ENCODE measurements at regions of chr7 and their contacts with region 1.

Region 1: DNA sequence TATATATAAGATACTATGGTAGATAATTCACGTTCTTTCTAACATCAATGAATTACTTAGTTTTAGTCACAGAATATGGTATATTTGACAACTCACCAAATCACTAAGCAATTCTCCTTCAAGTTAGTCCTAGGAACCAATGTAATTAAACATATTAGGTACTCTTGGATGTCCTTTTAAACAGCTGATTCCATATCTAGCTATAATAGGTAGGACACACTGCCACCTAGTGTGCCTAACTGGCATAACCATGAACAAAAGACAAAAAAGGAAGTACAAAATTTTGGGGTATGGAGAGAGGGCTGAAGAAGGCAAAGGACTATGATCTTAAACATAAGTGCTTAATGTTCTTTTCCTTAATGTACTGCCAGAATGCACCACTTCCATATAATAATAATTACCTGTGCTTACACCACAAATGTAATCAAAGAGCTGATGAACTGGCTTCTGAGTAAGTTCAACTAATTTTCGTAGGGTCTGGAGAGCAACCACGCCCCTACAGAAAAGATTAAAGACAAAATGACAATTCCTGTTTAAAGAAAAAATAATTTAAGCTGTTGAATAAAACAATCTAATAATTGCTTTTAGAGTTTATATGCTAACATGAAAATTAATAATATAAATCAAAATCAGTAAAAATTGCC is 28.7 kb downstream of the PNPLA8 start:
- DNase-seq: peak; percentile 70 to 82 (median 70)
- ATAC-seq: peak; percentile 91
- H3K4me3 ChIP-seq: no peak overlapping the region
- H3K27ac ChIP-seq: no peak overlapping the region
- H3K4me1 ChIP-seq: no peaks in the 10 kb centered on the region
- H3K27me3 ChIP-seq: no peaks in the 10 kb centered on the region
- CTCF ChIP-seq: peak; percentile 76 to 95 (median 87)
- EP300 ChIP-seq: no peak
- POLR2A ChIP-seq: no peak
- RAD21 ChIP-seq: peak; percentile 92 to 93

Region 2: DNA sequence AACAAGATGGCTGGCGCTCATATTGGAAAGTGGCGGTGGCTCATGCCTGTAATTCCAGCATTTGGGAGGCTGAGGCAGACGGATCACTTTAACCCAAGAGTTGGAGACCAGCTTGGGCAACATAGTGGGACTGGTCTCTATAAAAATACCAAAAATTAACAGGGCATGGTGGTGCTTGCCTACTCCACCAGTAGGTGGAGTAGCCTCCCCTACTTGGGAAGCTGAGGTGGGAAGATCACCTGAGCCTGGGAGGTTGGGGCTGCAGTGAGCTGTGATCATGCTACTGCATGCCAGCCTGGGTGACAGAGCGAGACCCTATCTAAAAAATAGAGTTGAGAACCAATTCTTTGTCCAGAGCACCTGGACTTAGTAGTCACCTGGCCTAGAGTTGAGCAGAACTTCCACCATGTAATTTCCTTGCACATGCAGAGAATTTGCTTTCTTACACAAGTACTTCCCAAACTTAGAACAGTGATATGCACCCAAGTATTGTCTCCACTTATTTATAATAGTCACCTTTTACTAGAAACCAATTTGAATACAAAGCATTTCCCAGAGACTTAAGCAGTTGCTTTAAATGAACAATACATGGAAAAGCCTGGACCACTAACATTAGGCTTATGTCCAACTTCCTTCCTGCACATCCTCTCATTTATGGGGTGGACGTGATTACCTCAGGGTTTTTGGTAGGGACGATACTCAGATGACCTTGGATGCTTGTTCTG is 382.9 kb before region 1 on chr7:
- CTCF ChIA-PET with region 1: interaction called, 9 read pairs
- POLR2A ChIA-PET with region 1: no interaction called
- in situ Hi-C with region 1: no loop called
- intact Hi-C with region 1: loop called (anchors 1 kb)
- DNase-seq: peak in 2 of 4 experiments; percentile 54 to 68
- ATAC-seq: peak; percentile 94
- H3K4me3 ChIP-seq: no peak overlapping the region
- H3K27ac ChIP-seq: no peak overlapping the region
- H3K4me1 ChIP-seq: peaks cover 0 to 3% of the 10 kb centered on the region in 2 experiments; a peak in 1 of 5 replicates
- H3K27me3 ChIP-seq: no peaks in the 10 kb centered on the region
- CTCF ChIP-seq: peak; percentile 82 to 94 (median 93)
- EP300 ChIP-seq: no peak
- POLR2A ChIP-seq: no peak
- RAD21 ChIP-seq: peak; percentile 76 to 85

Region 3: DNA sequence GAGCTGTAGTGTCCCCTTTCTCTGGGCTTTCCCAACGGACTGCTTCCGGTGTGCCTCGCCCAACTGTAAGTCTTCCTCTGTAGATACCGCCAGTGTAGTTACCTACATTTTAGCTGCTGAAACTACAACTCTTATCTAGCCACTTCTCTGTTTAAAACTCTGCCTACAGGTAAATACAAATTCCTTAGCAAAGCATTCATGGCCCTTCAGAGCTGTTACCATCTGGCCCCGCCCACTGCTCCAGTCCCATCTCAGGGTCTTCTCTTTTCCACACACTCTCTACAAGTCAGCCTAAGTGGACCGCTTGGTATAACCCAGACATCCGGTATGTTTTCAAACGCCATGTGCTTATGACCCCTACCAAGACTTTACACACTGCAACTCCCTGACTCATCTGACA is 326.1 kb before region 1 on chr7:
- CTCF ChIA-PET with region 1: no interaction called
- POLR2A ChIA-PET with region 1: no interaction called
- in situ Hi-C with region 1: no loop called
- intact Hi-C with region 1: no loop called
- DNase-seq: no peak
- ATAC-seq: peak; percentile 44
- H3K4me3 ChIP-seq: no peak overlapping the region
- H3K27ac ChIP-seq: no peak overlapping the region
- H3K4me1 ChIP-seq: no peaks in the 10 kb centered on the region
- H3K27me3 ChIP-seq: no peaks in the 10 kb centered on the region; a peak in 2 of 5 replicates
- CTCF ChIP-seq: no peak
- EP300 ChIP-seq: no peak
- POLR2A ChIP-seq: no peak
- RAD21 ChIP-seq: no peak

Region 4: DNA sequence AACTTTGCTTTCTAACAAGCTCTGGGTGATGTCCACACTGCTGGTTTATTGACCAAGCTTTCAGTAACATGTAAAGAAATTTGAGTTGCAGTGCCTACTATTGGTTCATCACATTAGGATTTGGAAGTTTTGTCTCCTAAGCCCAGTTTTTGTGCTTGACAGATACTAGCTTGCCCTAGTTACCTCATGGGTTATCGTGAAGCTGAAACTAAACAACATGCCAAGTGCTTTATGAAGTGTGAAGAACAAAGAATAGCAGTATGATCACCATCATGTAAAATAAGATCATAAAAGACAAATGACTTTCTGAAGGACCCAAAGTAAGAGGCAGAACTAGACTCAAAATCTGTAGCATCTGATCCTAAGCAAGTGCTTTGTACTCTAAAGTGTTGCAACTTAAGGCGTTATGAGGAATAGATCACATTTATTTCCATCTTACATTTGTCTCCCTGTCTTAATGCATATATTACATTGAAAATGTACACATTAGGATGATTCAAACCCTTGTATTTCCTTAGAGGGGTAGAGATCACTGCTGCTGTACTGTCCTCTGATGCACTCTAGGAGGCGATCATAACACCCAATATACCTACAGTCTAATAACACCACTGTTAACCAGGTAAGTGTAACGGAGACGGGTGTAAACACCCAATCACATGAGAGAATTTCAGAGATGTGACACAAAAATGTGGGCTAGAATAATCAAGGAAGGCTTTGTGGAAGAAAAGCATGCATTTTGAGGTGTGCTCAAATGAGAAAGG is 112.3 kb before region 1 on chr7:
- CTCF ChIA-PET with region 1: interaction called, 4 read pairs
- POLR2A ChIA-PET with region 1: no interaction called
- in situ Hi-C with region 1: no loop called
- intact Hi-C with region 1: loop called (anchors 10 kb)
- DNase-seq: peak in 1 of 4 experiments; percentile 27
- ATAC-seq: peak; percentile 92
- H3K4me3 ChIP-seq: no peak overlapping the region
- H3K27ac ChIP-seq: no peak overlapping the region
- H3K4me1 ChIP-seq: no peaks in the 10 kb centered on the region
- H3K27me3 ChIP-seq: peaks cover 2 to 9% of the 10 kb centered on the region in 2 experiments; a peak in 1 of 5 replicates
- CTCF ChIP-seq: peak; percentile 15 to 57 (median 54); a peak in 3 of 6 replicates
- EP300 ChIP-seq: no peak
- POLR2A ChIP-seq: no peak
- RAD21 ChIP-seq: peak in 1 of 2 experiments; percentile 58; a peak in 3 of 4 replicates

Region 5: GRCh38 chr7:108452722-108453121 is 44.5 kb before region 1 on chr7:
- CTCF ChIA-PET with region 1: interaction called, 6 read pairs
- POLR2A ChIA-PET with region 1: interaction called, 3 read pairs
- in situ Hi-C with region 1: no loop called
- intact Hi-C with region 1: loop called (anchors 2 kb)
- DNase-seq: peak; percentile 52 to 60 (median 56)
- ATAC-seq: peak; percentile 87
- H3K4me3 ChIP-seq: no peak overlapping the region
- H3K27ac ChIP-seq: no peak overlapping the region
- H3K4me1 ChIP-seq: peaks cover 0 to 20% of the 10 kb centered on the region in 2 experiments; a peak in 2 of 5 replicates
- H3K27me3 ChIP-seq: peaks cover 36 to 44% of the 10 kb centered on the region in 2 experiments
- CTCF ChIP-seq: peak; percentile 60 to 69 (median 69)
- EP300 ChIP-seq: no peak
- POLR2A ChIP-seq: no peak
- RAD21 ChIP-seq: peak; percentile 42 to 78; a peak in 3 of 4 replicates

Region 6: DNA sequence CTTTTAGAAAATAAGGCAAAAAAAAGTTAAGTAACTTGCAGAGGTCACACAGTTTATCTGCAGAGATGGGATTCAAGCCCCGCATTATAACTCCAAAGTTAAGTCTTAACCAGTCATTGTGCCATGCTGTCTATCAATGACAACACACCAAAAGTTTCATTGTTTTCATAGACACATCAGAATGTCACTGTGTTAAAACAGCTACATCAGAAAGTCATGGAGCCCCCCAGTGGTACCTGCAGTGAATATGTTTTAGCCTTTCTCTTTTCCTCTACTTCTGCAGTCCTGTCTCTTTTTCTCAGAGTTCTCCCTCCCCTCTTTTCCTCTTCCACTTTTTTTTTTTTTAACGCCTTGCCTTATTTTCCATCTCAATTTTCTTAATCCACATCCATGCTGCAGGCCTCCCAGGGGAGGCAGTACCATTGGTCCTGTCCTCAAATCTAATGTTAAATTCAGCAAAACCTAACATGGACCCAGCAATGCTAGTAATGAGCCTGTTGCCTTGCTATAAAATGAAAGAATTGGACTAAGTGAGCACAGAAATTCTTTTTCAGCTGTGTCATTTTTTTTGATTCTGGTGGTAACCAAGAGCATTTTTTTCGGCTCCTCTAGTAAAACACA is 37.2 kb before region 1 on chr7:
- CTCF ChIA-PET with region 1: interaction called, 3 read pairs
- POLR2A ChIA-PET with region 1: interaction called, 3 read pairs
- in situ Hi-C with region 1: no loop called
- intact Hi-C with region 1: loop called (anchors 2 kb)
- DNase-seq: peak; percentile 29 to 67 (median 45)
- ATAC-seq: peak; percentile 87
- H3K4me3 ChIP-seq: no peak overlapping the region
- H3K27ac ChIP-seq: no peak overlapping the region
- H3K4me1 ChIP-seq: peaks cover 0 to 15% of the 10 kb centered on the region in 2 experiments; a peak in 2 of 5 replicates
- H3K27me3 ChIP-seq: peaks cover 40 to 42% of the 10 kb centered on the region in 2 experiments
- CTCF ChIP-seq: peak; percentile 64 to 83 (median 77)
- EP300 ChIP-seq: no peak
- POLR2A ChIP-seq: no peak
- RAD21 ChIP-seq: peak; percentile 74 to 87